ENCODE measurements at regions of chr19 and their contacts with region 1.

Region 1: DNA sequence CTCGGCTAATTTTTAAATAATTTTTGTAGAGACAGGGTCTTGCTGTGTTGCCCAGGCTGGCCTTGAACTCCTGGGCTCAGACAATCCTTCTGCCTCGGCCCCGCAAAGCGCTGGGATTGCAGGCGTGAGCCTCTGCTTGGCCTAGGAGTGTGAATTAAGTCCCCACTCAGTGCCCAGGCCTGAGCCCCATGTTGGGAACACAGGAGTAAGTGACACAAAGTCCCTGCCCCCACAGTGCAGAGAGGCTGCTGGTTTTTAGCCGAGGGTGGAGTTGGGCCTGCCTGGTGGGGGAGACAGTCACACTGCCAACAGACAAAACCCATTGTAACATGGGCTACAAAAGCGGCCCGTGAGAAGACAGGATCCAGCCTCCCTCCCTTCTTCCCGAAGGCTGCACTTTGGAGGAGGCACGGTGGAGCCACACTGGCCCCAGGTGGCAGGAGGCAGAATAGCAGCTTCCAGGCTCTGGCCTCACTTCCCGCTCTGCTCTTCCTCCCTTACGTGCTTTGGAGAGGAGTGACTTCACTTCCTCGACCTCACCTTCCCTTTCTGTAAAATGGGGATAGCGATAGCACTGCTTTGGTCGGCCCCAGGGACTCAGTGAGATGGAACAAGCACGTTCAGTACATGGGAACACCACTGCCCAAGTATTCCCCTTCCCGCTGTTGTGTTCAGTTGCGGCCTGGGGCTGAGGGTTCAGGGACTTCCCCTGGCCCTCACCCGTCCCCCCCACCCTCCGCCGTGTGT is 15.2 kb upstream of the EHD2 start:
- DNase-seq: peak; percentile 72
- H3K4me3 ChIP-seq: no peak overlapping the region
- H3K27ac ChIP-seq: no peak overlapping the region
- H3K4me1 ChIP-seq: no peaks in the 10 kb centered on the region
- H3K27me3 ChIP-seq: no peaks in the 10 kb centered on the region
- CTCF ChIP-seq: peak; percentile 99

Region 2: DNA sequence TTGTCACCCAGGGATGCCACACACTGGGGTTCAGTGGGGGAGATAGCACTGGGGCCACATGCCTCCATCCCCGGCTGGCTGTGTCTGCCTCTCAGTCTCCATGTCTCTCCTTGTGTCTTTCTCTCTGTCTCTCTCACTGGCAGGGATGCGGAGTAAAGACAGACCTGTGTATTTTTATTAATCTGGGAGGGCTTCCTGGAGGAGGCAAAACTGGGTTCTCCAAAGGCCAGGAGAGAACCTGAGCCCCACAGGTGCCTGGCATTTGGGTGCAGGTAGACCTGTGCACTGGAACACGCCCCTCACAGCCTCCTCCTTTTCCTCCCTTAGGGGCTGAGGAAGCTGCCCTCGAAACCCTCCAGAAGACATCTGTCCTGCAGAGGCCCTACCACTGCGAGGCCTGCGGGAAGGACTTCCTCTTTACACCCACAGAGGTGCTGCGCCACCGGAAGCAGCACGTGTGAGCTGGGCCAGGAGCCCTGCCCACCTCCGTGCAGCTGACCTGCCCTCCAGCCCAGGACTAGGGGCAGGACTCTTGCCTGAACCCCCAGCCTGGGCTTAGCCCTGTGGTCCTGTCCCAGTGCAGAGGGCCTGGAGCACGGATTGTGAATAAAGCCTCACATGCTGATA is 316.3 kb before region 1 on chr19:
- CTCF ChIA-PET with region 1: no interaction called
- dilution Hi-C with region 1: no loop called
- in situ Hi-C with region 1: no loop called
- intact Hi-C with region 1: no loop called
- DNase-seq: no peak
- H3K4me3 ChIP-seq: no peak overlapping the region
- H3K27ac ChIP-seq: no peak overlapping the region
- H3K4me1 ChIP-seq: no peaks in the 10 kb centered on the region
- H3K27me3 ChIP-seq: no peaks in the 10 kb centered on the region
- CTCF ChIP-seq: no peak

Region 3: GRCh38 chr19:47436712-47437401 is 261.2 kb before region 1 on chr19:
- CTCF ChIA-PET with region 1: interaction called, 9 read pairs
- dilution Hi-C with region 1: no loop called
- in situ Hi-C with region 1: loop called (anchors 5 kb)
- intact Hi-C with region 1: loop called (anchors 1 kb)
- DNase-seq: peak; percentile 55
- H3K4me3 ChIP-seq: no peak overlapping the region
- H3K27ac ChIP-seq: no peak overlapping the region
- H3K4me1 ChIP-seq: no peaks in the 10 kb centered on the region
- H3K27me3 ChIP-seq: no peaks in the 10 kb centered on the region
- CTCF ChIP-seq: peak; percentile 70 to 93

Region 4: DNA sequence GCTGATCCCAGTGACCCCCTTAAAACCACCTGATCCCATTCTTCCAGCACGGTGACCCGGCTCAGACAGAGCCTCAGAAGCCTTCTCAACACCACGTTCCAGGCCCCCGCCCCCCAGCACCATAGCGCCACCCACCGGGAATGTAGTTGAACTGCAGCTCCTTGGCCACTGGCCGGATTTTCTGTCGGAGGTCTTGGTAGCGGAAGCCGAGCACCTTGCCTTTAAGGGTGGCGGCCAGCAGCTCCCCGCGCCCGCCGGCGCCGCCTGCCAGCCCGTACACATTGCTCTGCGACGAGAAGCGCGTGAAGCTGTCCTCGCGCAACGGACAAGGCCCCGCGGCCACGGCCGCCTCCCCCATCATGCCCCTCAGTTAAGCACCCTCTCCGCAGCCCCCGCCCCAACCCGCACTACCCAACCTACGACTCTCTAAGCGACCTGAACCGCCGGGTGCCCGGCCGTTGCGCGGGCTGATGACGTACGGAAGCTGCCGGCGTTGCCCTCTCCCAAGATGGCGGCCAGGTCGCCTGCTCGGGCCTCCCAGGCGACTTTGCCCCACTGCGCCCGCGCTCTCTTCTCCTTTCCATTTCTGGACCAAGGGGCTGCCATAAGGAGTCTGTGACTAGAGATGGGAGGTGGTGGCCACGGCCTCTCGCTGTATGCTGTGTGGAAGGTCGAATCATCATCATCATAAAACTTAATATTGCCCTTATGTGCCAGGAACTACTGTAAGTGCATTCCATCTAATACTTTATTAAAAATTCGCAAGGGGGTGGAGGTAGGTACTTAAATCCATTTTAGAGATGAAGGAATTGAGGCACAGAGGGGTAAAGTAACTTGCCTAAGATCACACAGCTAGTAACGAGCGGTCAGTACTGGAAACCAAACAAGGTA is 214.0 kb before region 1 on chr19 and contains the start of gene KPTN:
- CTCF ChIA-PET with region 1: no interaction called
- dilution Hi-C with region 1: no loop called
- in situ Hi-C with region 1: no loop called
- intact Hi-C with region 1: loop called (anchors 1 kb)
- DNase-seq: peak; percentile 82
- H3K4me3 ChIP-seq: peak within 1 kb of the TSS; percentile 73 to 96 (median 92)
- H3K27ac ChIP-seq: peak within 1 kb of the TSS; percentile 66
- H3K4me1 ChIP-seq: peaks cover 3% of the 10 kb centered on the region
- H3K27me3 ChIP-seq: no peaks in the 10 kb centered on the region
- CTCF ChIP-seq: peak; percentile 95 to 99
- total RNA-seq, gene KPTN: 1.5 to 10.8 TPM

Region 5: GRCh38 chr19:47514869-47515588 is 183.0 kb before region 1 on chr19 and contains the start of gene NAPA:
- CTCF ChIA-PET with region 1: interaction called, 3 read pairs
- dilution Hi-C with region 1: no loop called
- in situ Hi-C with region 1: loop called in 1 of 2 experiments (anchors 10 kb)
- intact Hi-C with region 1: loop called (anchors 1 kb)
- DNase-seq: peak; percentile 100
- H3K4me3 ChIP-seq: peak within 1 kb of the TSS; percentile 84 to 99 (median 91)
- H3K27ac ChIP-seq: peak within 1 kb of the TSS; percentile 85
- H3K4me1 ChIP-seq: peaks cover 26% of the 10 kb centered on the region
- H3K27me3 ChIP-seq: no peaks in the 10 kb centered on the region
- CTCF ChIP-seq: no peak
- total RNA-seq, gene NAPA: 46.0 to 70.7 TPM

Region 6: DNA sequence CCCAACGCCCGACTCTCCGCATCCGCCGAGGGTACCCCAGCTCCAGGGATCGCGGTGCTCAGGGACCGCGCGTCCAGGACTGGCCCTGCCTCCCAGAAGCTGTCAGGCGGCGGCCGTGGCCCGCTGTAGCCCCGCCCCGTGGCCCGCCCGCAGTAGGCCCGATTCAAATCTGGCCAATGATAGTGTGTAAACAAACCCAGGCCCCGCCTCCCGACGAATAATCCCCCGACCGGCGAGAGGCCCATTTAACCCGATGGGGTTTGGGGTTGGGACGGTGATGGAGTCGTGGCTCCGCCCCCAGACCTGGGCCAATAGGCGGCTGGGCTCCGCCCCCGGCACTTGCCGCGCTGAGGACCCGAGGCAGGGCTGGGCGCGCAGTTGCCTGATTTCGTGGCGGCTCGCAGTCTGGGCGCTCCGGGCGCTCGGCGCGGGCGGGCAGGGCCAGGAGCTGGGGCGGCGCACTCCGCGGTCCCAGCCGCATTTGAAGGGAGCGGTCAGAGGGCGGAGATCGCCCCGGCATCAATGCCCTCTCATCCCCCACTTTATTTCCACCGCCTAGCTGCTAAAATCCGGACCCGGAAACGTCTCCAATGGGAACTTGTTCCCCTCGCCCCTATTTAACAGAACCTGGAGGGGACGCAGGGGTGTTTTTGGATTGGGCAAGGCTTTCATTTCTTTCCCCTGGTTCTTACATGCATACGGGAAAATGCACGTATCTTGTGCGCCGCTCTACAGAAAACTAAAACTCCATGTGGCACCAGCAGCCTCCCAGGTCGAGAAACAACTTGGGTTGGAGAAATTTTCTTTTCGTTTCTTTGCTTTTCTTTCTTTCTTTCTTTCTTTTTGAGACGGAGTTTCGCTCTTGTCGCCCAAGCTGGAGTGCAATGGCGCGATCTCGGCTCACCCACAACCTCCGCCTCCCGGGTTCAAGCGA is 97.5 kb before region 1 on chr19:
- CTCF ChIA-PET with region 1: no interaction called
- dilution Hi-C with region 1: no loop called
- in situ Hi-C with region 1: no loop called
- intact Hi-C with region 1: loop called (anchors 2 kb)
- DNase-seq: peak; percentile 99
- H3K4me3 ChIP-seq: peak overlapping the region; percentile 57 to 90 (median 62)
- H3K27ac ChIP-seq: peak overlapping the region; percentile 70
- H3K4me1 ChIP-seq: peaks cover 17% of the 10 kb centered on the region
- H3K27me3 ChIP-seq: no peaks in the 10 kb centered on the region
- CTCF ChIP-seq: peak in 1 of 2 donors; percentile 2

Region 7: DNA sequence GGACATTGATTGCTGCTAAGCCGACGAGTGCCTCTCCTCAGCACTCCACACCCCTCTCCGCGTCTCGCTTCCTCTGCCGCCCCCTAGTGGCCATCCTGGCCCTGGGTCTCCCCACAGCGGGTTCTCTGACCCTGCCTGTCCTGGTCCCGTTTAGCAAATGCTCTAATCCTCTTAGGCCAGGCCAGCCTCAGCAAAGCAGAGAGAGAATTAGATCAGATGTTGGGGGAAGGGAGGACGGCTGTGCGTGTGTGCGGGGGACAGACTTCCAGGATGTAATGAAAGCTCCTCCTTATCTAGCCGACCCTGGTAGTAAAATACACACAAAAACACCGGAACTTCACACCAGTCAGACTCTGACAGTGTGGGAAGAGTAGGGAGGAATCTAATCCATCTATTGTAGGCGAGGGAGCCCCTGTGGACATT is 165.5 kb after region 1 on chr19:
- CTCF ChIA-PET with region 1: no interaction called
- dilution Hi-C with region 1: no loop called
- in situ Hi-C with region 1: no loop called
- intact Hi-C with region 1: loop called (anchors 5 kb)
- DNase-seq: peak; percentile 45
- H3K4me3 ChIP-seq: no peak overlapping the region
- H3K27ac ChIP-seq: no peak overlapping the region
- H3K4me1 ChIP-seq: no peaks in the 10 kb centered on the region
- H3K27me3 ChIP-seq: no peaks in the 10 kb centered on the region
- CTCF ChIP-seq: peak; percentile 87 to 95